Ascending aorta (tissue), 2 donors: ENCODE measurements at regions of chr2 and their contacts with region 1.

Region 1: GRCh38 chr2:45169339-45170190 is 160.3 kb upstream of the SIX2 start:
- DNase-seq: no peak
- H3K4me3 ChIP-seq: peak overlapping the region; percentile 70 to 71
- H3K27ac ChIP-seq: peak overlapping the region; percentile 57 to 65
- H3K4me1 ChIP-seq: peaks cover 0 to 2% of the 10 kb centered on the region in 2 donors
- H3K27me3 ChIP-seq: no peaks in the 10 kb centered on the region
- CTCF ChIP-seq: peak in 1 of 3 experiments; percentile 13

Region 2: GRCh38 chr2:45242161-45242741 is 72.7 kb after region 1 on chr2:
- intact Hi-C with region 1: loop called (anchors 5 kb)
- DNase-seq: peak in 1 of 2 donors; percentile 75
- H3K4me3 ChIP-seq: no peak overlapping the region
- H3K27ac ChIP-seq: peak overlapping the region; percentile 70 to 77
- H3K4me1 ChIP-seq: peaks cover 7 to 16% of the 10 kb centered on the region in 2 donors
- H3K27me3 ChIP-seq: no peaks in the 10 kb centered on the region
- CTCF ChIP-seq: no peak

Region 3: DNA sequence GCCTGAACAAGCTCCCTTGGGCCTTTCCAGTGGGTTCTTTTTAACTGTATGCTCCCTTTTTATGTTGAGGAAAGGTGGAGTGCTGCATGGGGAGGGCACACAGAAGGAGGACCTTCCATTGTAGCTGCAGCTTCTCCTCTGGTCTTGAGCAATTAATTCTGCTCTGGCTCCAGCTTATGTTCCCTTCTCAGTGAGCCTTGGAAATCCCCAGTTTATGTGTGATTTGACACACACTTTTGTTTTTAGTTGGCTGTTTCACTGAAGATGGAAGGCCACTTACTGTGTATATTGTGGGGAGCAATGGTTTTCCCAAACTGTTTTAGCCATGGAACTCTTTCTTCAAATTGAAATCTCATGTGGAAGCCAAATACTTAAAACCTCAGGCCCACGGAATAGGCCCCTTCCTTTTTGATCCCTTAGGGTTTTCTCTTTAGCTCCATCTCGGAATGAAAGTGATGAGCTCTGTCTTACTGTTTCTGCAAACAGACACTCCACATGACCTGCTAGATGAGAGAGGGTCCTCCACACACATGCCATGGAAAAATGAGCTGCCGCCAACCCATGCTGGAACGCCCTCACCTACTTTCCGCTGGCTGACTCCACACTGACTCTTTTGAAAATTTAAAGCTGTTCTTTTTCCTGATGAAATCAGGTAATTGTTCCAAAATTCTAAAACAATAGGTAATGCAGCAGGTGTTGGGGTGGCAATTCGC is 120.6 kb after region 1 on chr2:
- intact Hi-C with region 1: loop called (anchors 5 kb)
- DNase-seq: no peak
- H3K4me3 ChIP-seq: no peak overlapping the region
- H3K27ac ChIP-seq: no peak overlapping the region
- H3K4me1 ChIP-seq: peaks cover 0 to 3% of the 10 kb centered on the region in 2 donors
- H3K27me3 ChIP-seq: no peaks in the 10 kb centered on the region
- CTCF ChIP-seq: no peak